B cell (primary cell): ENCODE measurements at regions of chr3 and their contacts with region 1.

Region 1: DNA sequence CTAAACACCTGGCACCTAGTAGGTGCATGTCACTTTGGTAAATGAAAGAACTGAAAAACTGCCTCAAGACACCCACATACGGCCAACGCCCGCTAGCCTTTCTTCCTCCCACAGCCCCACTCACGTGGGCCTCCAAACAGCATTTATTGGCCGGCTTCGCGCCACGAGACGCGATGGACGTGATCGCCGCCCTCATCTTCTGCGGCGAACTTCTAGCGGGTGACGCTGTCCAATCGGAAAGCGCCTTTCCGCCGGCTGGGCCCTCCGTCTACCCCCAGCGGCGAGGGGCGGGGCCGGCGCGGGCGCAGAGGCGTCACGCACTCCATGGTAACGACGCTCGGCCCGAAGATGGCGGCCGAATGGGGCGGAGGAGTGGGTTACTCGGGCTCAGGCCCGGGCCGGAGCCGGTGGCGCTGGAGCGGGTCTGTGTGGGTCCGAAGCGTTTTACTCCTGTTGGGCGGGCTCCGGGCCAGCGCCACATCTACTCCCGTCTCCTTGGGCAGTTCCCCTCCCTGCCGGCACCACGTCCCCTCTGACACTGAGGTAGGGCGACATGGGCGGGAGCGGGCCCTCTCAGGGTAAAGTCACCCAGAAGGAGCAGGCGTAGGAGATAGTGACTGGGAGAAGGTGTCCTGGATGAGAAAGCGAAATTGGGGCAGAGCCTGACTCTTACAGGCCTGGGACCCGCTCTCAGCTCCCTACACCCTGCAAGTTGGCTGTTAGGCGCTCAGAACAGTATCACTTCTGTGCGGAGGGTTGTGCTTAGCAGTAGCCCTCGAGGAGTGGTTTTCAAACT is at the start of gene LMLN:
- DNase-seq: peak; percentile 97
- ATAC-seq: peak; percentile 97
- H3K4me3 ChIP-seq: peak within 1 kb of the TSS; percentile 62 to 91 (median 83)
- H3K4me3 Mint-ChIP-seq: peak within 1 kb of the TSS; percentile 87
- H3K27ac ChIP-seq: peak within 1 kb of the TSS; percentile 60 to 74
- H3K27ac Mint-ChIP-seq: peak within 1 kb of the TSS; percentile 95
- H3K4me1 ChIP-seq: peaks cover 15 to 19% of the 10 kb centered on the region in 2 donors
- H3K4me1 Mint-ChIP-seq: peaks cover 32% of the 10 kb centered on the region
- H3K27me3 ChIP-seq: no peaks in the 10 kb centered on the region
- H3K27me3 Mint-ChIP-seq: no peaks in the 10 kb centered on the region
- CTCF ChIP-seq: no peak
- total RNA-seq, gene LMLN: 5.5 and 6.7 TPM in 2 replicates

Region 2: GRCh38 chr3:196872316-196872715 is 1087.8 kb before region 1 on chr3:
- CTCF ChIA-PET with region 1: no interaction called
- POLR2A ChIA-PET with region 1: no interaction called
- intact Hi-C with region 1: no loop called
- DNase-seq: no peak
- ATAC-seq: no peak
- H3K4me3 ChIP-seq: no peak overlapping the region
- H3K4me3 Mint-ChIP-seq: no peak overlapping the region
- H3K27ac ChIP-seq: no peak overlapping the region
- H3K27ac Mint-ChIP-seq: no peak overlapping the region
- H3K4me1 ChIP-seq: peaks cover 12 to 16% of the 10 kb centered on the region in 2 donors
- H3K4me1 Mint-ChIP-seq: peaks cover 39% of the 10 kb centered on the region
- H3K27me3 ChIP-seq: no peaks in the 10 kb centered on the region
- H3K27me3 Mint-ChIP-seq: no peaks in the 10 kb centered on the region
- CTCF ChIP-seq: no peak

Region 3: GRCh38 chr3:197949754-197950660 is 10.1 kb before region 1 on chr3 and contains the start of gene RPL35A:
- CTCF ChIA-PET with region 1: interaction called, 4 read pairs
- POLR2A ChIA-PET with region 1: interaction called, 5 read pairs
- intact Hi-C with region 1: loop called (anchors 1 kb)
- DNase-seq: peak; percentile 98
- ATAC-seq: peak; percentile 92
- H3K4me3 ChIP-seq: peak within 1 kb of the TSS; percentile 65 to 89 (median 71)
- H3K4me3 Mint-ChIP-seq: peak within 1 kb of the TSS; percentile 97
- H3K27ac ChIP-seq: peak within 1 kb of the TSS; percentile 97 to 100
- H3K27ac Mint-ChIP-seq: peak within 1 kb of the TSS; percentile 99
- H3K4me1 ChIP-seq: peaks cover 19 to 34% of the 10 kb centered on the region in 2 donors
- H3K4me1 Mint-ChIP-seq: peaks cover 36% of the 10 kb centered on the region
- H3K27me3 ChIP-seq: no peaks in the 10 kb centered on the region
- H3K27me3 Mint-ChIP-seq: no peaks in the 10 kb centered on the region
- CTCF ChIP-seq: no peak
- total RNA-seq, gene RPL35A: 1,136 and 1,228 TPM in 2 replicates

Region 4: GRCh38 chr3:198071602-198072285 is 111.6 kb after region 1 on chr3:
- CTCF ChIA-PET with region 1: no interaction called
- POLR2A ChIA-PET with region 1: no interaction called
- intact Hi-C with region 1: loop called (anchors 2 kb)
- DNase-seq: peak; percentile 31
- ATAC-seq: peak; percentile 97
- H3K4me3 ChIP-seq: no peak overlapping the region
- H3K4me3 Mint-ChIP-seq: peak overlapping the region; percentile 30
- H3K27ac ChIP-seq: no peak overlapping the region
- H3K27ac Mint-ChIP-seq: peak overlapping the region; percentile 43
- H3K4me1 ChIP-seq: peaks cover 16 to 23% of the 10 kb centered on the region in 2 donors
- H3K4me1 Mint-ChIP-seq: peaks cover 29% of the 10 kb centered on the region
- H3K27me3 ChIP-seq: peaks cover 0 to 9% (median 2%) of the 10 kb centered on the region in 4 experiments
- H3K27me3 Mint-ChIP-seq: peaks cover 12% of the 10 kb centered on the region
- CTCF ChIP-seq: peak; percentile 25